HEK293T (cell line): ENCODE measurements at regions of chr12 and their contacts with region 1.

Region 1: DNA sequence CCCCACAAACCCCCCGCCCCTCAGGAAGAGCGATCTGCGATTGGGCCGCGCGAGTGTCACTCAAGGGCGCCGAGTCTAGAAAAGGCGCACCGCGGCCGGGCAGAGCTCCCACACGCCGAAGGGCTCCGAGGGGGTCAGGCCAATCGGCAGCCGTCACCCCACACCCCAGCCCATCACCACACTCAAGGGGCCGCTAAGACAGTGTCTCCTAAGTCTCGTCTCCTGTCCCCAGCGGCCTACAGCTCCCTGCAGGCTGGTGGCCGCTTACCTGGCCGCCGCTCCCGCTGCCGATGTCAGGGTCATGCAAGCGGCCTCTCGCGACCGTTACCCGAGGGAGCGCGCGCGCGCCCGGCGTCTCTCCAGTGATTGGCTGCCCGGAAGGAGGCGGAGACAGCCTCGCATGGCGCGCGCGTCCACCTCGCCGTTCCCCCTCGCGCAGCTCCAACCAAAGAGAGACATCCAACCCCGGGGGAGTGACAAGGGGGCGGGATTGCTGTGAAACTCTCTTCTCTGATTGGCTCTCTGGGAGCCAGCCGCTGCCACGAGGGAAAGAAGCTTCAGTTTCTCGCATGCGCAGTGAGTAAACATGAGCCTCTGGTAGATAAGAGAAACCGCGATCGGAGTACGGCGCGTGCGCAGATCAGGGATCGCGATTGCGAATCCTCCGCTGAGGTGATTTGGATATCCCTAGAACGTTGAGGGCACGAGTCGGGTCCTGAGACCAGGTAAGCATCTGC is at the starts of genes MPHOSPH9 and MTRFR:
- DNase-seq: peak; percentile 97

Region 2: GRCh38 chr12:122980183-122981046 is 252.6 kb before region 1 on chr12 and contains the start of gene ARL6IP4:
- CTCF ChIA-PET with region 1: no interaction called
- POLR2A ChIA-PET with region 1: interaction called, 15 read pairs
- DNase-seq: peak; percentile 73

Region 3: DNA sequence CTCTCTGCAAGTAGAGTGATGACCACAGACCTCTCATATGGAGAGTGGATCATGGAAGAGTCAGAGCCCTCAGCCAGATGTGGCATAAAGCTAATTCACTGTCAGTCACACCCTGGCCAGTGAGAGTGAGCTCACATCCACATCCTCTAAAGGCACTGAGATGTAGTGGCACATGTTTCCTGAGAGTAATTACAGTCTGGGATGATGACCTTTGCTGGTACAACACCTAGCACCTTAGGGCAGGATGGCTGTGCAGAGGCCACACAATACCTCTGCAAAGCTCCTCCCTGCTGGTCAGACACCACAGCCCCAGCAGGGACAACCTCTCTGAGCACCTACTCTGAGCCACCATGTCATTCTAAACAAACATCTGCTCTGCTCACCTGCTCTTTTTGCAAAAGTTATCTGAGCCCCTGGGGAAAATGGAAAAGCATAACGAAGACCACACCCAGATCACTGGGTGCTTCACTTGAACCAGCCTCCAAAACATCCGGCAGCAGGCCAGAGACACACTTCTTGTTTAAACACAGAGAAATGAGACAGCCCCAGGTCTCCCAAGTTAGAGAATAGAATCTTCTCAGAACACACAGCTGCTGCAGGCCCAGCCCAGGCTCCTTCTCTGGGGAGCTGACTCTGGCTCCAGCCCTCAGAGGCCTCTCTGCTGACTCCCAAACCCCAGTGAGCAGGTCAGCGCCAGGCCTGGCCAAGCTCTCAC is 112.4 kb before region 1 on chr12:
- CTCF ChIA-PET with region 1: no interaction called
- POLR2A ChIA-PET with region 1: no interaction called
- DNase-seq: no peak

Region 4: DNA sequence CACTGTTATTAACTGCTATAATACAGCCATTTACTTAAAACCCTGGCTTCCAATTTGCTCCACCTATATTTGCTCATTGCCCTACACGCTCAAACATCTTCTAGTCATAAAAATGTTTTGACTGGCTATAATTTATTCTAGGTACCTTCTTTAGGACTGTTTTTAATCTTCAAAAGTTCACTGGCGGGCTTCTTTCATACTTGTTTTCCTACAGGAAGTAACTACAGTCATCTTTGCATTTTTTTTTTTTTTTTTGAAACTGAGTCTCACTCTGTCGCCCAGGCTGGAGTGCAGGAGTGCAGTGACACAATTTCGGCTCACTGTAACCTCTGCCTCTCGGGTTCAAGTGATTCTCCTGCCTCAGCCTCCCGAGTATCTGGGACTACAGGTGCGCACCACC is 32.6 kb before region 1 on chr12:
- CTCF ChIA-PET with region 1: no interaction called
- POLR2A ChIA-PET with region 1: interaction called, 17 read pairs
- DNase-seq: no peak

Region 5: DNA sequence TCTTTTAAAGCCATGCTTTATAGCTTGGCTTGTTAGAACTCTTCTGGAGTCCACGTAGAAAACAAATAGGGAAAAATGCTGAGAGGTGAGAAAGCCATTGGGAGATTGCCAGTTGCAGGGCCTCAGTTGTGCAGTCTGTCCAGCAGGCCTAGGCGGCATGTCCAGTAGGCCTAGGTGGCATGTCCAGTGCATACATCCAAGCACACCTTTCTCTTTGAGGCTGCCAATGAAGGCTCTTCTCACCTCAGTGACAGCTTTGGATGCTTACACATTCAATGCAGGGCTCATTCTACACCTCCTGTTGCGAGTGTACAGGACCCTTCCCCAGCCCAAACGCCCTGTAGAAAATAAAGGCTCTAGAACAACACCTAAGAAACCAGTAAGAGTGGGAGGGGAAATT is 25.6 kb after region 1 on chr12:
- CTCF ChIA-PET with region 1: interaction called, 7 read pairs
- POLR2A ChIA-PET with region 1: interaction called, 12 read pairs
- DNase-seq: no peak

Region 6: GRCh38 chr12:123713398-123713797 is 480.4 kb after region 1 on chr12:
- CTCF ChIA-PET with region 1: no interaction called
- POLR2A ChIA-PET with region 1: interaction called, 10 read pairs
- DNase-seq: no peak